Posterior vena cava (tissue), 2 donors: ENCODE measurements at regions of chr1 and their contacts with region 1.

Region 1: DNA sequence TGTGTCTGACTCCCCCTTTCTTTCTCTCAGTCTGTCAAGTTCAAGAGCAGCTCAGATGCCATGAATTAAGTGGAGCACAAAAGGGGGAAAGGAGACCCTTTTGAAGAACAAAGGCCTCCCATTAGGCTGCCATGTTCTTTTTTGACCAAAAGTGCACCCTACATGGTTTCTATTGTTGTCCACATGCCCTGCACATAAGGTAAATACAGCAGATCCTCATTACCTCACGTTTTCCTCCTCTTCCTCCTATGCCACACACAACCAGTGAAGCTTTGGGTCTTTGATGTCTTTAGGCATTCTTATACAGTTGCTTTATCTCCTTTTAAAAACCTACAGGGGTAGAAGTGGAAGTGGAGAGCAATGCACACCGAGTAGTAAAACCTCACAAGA is 47.7 kb downstream of the POU2F1 start:
- DNase-seq: no peak

Region 2: DNA sequence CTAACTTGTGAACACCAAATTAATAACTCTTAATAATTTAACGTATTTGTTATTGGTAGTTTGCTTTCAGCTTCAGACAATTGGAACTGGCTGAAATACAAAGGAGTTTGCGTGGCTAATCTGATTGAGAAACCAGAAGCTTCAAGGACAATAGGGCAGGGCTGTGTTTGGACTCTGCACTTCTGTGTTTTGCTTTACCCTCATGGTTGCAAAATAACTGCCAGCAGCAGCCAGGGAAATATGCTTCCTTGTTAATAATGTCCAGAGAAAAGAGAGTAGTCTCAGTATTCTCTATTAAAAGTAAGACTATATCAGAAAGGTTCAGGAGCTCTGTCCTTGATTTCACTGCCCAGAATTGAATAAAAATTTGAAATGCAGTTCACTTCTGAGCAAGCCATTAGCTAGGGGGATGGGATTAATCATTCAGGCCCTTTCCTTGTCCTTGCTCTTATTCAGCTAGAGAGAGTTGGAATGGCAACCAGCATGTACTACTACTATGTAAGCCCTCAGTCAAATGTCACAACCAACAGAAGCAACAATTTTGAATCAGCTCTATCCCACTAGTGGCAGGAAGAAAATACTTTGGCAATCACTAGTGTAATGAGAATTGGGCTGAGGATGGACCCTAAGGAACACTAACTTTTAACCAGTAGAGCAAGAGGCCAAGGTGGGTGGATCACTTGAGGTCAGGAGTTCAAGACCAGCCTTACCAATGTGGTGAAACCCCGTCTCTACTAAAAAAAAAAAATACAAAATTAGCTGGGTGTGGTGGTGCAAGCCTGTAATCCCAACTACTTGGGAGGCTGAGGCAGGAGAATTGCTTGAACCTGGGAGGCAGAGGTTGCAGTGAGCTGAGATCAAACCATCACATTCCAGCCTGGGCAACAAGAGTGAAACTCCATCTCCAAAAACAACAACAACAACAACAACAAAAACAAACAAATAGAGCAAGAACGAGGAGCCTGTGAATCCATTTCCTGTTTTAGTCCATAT is 29.1 kb after region 1 on chr1:
- intact Hi-C with region 1: no loop called
- DNase-seq: no peak

Region 3: DNA sequence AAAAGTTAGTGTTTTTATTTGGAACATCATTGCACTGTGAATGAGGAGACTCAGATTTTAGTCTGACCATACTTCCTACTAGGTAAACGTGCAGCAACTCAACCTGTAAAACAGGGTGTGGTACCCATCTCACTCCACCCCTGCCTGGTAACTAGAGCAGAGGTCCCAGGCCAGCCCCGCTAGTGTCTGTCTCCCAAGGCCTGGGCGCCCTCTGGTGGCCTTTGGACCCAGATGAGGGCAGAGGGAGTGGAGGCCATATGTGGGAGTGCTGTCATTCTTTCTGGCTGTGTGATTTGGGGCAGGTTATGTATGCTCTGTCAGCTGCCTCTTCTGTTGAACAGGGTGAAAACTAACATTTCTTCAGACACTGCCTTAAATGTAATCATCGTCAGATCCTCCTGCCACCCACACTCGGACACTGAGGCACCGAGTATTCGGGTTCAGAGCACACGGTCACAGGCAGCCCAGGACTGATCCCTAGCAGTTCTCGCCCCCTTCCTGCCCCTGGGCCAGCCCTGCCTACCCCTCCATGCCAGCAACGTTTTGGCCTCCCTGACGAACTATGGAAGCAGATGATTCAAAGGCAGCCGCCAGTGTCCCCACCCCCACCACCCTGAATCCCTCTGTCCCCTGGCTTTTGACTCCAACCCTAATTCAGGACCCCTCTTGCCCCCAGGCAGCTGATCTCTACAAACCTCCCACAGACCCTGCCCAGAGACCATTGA is 173.9 kb after region 1 on chr1:
- intact Hi-C with region 1: loop called (anchors 5 kb)
- DNase-seq: peak; percentile 94